ENCODE measurements at regions of chr3 and their contacts with region 1.

Region 1: DNA sequence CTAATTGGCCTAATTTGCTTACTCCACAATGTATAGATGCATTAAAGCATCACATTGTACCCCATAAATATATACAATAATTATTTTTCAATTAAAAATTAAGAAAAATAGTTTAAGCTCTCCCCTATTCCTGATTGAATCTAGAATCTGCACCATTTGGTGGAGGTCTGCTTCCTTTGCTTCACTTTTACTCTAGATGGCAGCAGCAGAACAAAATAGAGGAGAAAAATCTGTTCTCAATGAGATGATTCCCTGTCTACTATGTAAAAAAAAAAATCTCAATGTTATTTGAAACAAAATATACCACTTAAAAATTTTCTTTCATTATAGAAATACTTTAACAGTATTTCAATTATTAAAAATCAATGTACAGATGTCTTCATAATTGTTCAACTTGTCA is 109.6 kb upstream of the FXR1 start:
- DNase-seq: no peak
- ATAC-seq: no peak
- H3K4me3 ChIP-seq: no peak overlapping the region
- H3K27ac ChIP-seq: no peak overlapping the region
- H3K4me1 ChIP-seq: peaks cover 0 to 10% (median 0%) of the 10 kb centered on the region in 12 donors
- H3K27me3 ChIP-seq: no peaks in the 10 kb centered on the region
- CTCF ChIP-seq: peak; percentile 27 to 66 (median 50)
- POLR2A ChIP-seq: no peak

Region 2: DNA sequence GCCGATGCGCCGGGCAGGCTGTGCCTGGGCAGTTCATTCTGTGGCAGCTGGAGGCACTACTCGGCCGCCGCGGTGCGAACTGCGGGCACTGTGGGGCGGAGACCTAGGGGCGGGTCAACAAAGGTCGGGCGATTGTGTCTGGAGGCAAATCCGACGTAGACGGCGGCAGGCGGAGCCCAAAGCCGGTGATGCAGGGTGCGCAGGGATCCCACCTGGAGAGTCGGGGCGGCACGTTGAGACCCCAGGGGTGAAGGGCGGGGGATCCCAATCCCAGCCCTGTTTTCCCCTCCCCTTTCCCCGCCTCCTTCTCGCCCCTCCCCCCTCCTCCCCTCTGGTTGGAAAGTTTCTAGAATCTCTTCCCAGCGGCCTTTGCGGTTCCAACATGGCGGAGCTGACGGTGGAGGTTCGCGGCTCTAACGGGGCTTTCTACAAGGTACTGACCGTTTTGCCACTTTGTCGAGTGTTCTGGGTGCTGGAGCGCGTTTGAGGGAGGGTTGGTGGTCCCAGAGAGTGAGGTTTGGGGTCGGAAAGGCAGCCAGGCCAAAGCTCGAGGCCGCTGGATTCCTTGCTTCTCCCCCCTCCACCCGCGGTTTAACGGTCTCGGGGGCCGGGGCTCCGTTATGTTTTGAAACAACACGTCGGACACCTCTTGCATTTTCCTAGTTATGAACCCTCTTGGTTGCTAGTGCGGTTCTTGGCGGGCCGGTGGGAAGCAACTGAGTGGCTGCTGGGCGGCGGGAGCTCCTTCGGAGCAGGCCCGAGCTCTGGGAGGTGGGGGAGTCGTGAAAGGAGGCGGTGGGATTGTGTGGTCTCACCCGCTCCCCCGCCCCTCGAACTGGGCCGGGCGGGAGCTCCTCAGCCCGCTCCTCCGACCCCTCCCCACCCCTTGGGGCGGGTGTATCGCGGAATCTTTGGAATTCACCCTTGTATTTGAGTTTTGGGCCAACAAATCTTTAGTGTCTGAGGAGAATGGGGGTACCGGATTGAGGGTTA is 109.8 kb after region 1 on chr3 and contains the start of gene FXR1:
- intact Hi-C with region 1: loop called in 1 of 10 experiments (anchors 5 kb)
- DNase-seq: peak; percentile 88 to 94 (median 91)
- ATAC-seq: peak; percentile 98 to 100 (median 99)
- H3K4me3 ChIP-seq: peak within 1 kb of the TSS; percentile 66 to 97 (median 92)
- H3K27ac ChIP-seq: peak within 1 kb of the TSS; percentile 81 to 97 (median 93)
- H3K4me1 ChIP-seq: peaks cover 0 to 50% (median 27%) of the 10 kb centered on the region in 12 donors
- H3K27me3 ChIP-seq: no peaks in the 10 kb centered on the region
- CTCF ChIP-seq: peak; percentile 45 to 92 (median 80)
- POLR2A ChIP-seq: peak in 1 of 2 donors; percentile 65
- total RNA-seq, gene FXR1: 184 to 298 (median 255) TPM

Region 3: DNA sequence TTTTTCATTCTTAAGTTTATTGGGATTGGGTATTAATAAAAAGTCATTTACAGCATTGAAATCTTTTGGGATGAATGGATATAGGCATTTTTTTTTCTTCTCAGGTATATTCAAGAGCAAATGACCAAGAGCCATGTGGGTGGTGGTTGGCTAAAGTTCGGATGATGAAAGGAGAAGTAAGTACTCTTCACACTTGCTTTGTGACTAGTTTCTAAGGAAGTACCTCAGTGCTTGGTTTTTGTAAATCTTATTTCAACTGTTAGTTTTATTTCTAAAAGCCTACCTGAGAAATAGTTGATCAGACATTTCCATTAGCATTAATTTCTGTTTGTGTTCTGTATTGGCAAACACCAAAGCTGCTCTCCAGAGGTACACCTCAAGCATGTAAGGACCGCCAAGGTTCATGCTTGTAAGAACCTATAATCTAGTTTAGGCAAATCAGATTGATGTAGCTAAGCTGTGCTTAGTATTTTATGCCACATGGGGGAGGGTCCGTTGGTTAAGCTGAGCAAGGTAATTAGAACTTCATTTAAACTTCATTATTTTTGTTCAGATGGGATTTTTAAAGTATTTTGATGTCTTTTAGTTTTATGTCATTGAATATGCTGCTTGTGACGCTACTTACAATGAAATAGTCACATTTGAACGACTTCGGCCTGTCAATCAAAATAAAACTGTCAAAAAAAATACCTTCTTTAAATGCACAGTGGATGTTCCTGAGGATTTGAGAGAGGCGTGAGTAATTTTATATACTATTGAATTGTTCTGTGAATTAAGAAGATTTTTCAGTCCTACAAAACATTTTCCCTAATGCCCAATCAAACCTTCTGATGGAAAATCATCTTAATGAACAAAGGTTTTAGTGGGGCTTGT is 145.2 kb after region 1 on chr3:
- intact Hi-C with region 1: no loop called
- DNase-seq: no peak
- ATAC-seq: no peak
- H3K4me3 ChIP-seq: no peak overlapping the region
- H3K27ac ChIP-seq: no peak overlapping the region
- H3K4me1 ChIP-seq: no peaks in the 10 kb centered on the region
- H3K27me3 ChIP-seq: no peaks in the 10 kb centered on the region
- CTCF ChIP-seq: no peak
- POLR2A ChIP-seq: no peak

Region 4: DNA sequence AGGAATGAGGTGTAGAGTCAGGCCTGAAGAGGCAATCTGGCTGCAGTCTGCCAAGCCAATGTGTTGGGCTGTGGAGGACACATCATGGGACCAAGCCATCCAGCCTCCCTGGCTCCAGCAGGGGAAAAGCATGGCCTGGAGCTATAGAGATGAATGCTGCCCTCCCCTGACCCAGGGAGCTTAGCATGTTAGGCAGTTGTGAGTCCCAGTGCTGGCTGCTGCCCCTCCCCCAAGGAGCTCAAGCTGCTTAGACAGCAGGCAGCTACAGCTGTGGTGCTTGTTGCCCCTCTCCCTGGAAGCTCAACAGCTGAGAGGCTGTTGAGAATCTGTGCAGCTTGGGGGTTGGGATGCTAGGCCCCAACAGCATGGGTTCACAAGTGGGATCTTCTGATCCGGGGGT is 272.3 kb after region 1 on chr3:
- intact Hi-C with region 1: loop called in 1 of 10 experiments (anchors 10 kb)
- DNase-seq: no peak
- ATAC-seq: no peak
- H3K4me3 ChIP-seq: no peak overlapping the region
- H3K27ac ChIP-seq: no peak overlapping the region
- H3K4me1 ChIP-seq: no peaks in the 10 kb centered on the region
- H3K27me3 ChIP-seq: no peaks in the 10 kb centered on the region
- CTCF ChIP-seq: no peak
- POLR2A ChIP-seq: no peak

Region 5: GRCh38 chr3:181176601-181177000 is 373.8 kb after region 1 on chr3:
- intact Hi-C with region 1: loop called (anchors 2 to 10 kb)
- DNase-seq: peak in 4 of 5 donors; percentile 36 to 63 (median 39)
- ATAC-seq: no peak
- H3K4me3 ChIP-seq: no peak overlapping the region
- H3K27ac ChIP-seq: no peak overlapping the region
- H3K4me1 ChIP-seq: peaks cover 0 to 4% (median 0%) of the 10 kb centered on the region in 12 donors
- H3K27me3 ChIP-seq: no peaks in the 10 kb centered on the region
- CTCF ChIP-seq: peak; percentile 40 to 69 (median 54)
- POLR2A ChIP-seq: no peak

Region 6: DNA sequence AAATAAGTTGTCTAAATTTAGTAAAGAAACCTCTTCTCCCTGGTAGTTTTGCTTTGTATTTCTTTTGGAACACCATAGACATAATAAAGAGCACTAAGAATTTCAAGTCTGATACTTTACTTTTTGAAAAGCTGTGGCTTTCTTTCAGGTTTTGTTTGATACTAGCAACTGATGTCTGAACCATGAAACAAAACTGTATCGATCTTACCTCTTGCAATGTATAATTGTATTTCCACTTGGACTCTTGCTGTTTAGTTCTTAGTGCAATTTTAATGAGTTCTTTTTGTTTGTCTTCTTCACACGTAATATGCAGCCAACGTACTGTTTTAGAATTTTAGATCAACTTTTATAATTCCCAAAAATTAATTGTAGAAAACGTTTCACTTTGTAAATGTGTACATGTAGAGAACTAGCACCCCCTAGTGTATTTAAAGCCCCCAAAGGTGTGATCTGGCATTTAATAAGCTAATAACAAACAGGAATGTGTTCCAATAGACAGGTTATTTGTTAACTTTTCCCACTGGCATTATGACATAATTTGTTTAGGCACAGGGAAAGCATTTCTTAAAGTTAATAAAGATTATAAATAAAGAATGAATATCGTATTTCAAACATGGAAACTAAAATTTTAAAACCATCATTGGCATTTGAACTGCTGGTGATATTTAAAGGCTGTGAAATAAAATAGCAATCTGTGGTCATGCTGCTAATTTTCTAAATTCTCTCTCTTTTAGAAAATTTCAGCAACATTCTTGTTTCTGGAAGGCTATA is 475.8 kb after region 1 on chr3:
- intact Hi-C with region 1: loop called in 2 of 10 experiments (anchors 5 to 10 kb)
- DNase-seq: no peak
- ATAC-seq: no peak
- H3K4me3 ChIP-seq: no peak overlapping the region
- H3K27ac ChIP-seq: no peak overlapping the region
- H3K4me1 ChIP-seq: no peaks in the 10 kb centered on the region
- H3K27me3 ChIP-seq: peaks cover 0 to 9% (median 0%) of the 10 kb centered on the region in 9 donors
- CTCF ChIP-seq: peak in 11 of 12 donors; percentile 16 to 54 (median 36)
- POLR2A ChIP-seq: no peak